ENCODE measurements at regions of chr16 and their contacts with region 1.

Region 1: GRCh38 chr16:84726079-84726668 is 26.4 kb downstream of the USP10 start:
- DNase-seq: peak; percentile 55
- H3K4me3 ChIP-seq: peak overlapping the region in 2 of 4 donors; percentile 10 to 33
- H3K27ac ChIP-seq: peak overlapping the region in 3 of 4 donors; percentile 35 to 65 (median 45)
- H3K4me1 ChIP-seq: peaks cover 21 to 75% (median 26%) of the 10 kb centered on the region in 3 donors
- H3K27me3 ChIP-seq: no peaks in the 10 kb centered on the region
- CTCF ChIP-seq: peak; percentile 93 to 96 (median 95)
- POLR2A ChIP-seq: no peak

Region 2: GRCh38 chr16:84511180-84511824 is 214.9 kb before region 1 on chr16:
- intact Hi-C with region 1: loop called (anchors 10 kb)
- DNase-seq: no peak
- H3K4me3 ChIP-seq: peak overlapping the region in 1 of 4 donors; percentile 26
- H3K27ac ChIP-seq: no peak overlapping the region
- H3K4me1 ChIP-seq: peaks cover 6 to 18% (median 8%) of the 10 kb centered on the region in 3 donors
- H3K27me3 ChIP-seq: no peaks in the 10 kb centered on the region
- CTCF ChIP-seq: peak; percentile 92 to 99 (median 96)
- POLR2A ChIP-seq: no peak

Region 3: GRCh38 chr16:84617791-84618580 is 108.2 kb before region 1 on chr16 and contains the start of gene COTL1:
- intact Hi-C with region 1: loop called (anchors 5 kb)
- DNase-seq: peak; percentile 78
- H3K4me3 ChIP-seq: peak within 1 kb of the TSS; percentile 54 to 87 (median 72)
- H3K27ac ChIP-seq: peak within 1 kb of the TSS; percentile 75 to 90 (median 82)
- H3K4me1 ChIP-seq: peaks cover 24 to 63% (median 29%) of the 10 kb centered on the region in 3 donors
- H3K27me3 ChIP-seq: peaks cover 0 to 11% (median 0%) of the 10 kb centered on the region in 4 donors
- CTCF ChIP-seq: no peak
- POLR2A ChIP-seq: peak in 2 of 4 donors; percentile 75 to 80
- total RNA-seq, gene COTL1: 7.9 to 34.2 (median 23.4) TPM

Region 4: GRCh38 chr16:84672276-84673202 is 53.6 kb before region 1 on chr16:
- intact Hi-C with region 1: loop called (anchors 5 kb)
- DNase-seq: peak; percentile 15
- H3K4me3 ChIP-seq: no peak overlapping the region
- H3K27ac ChIP-seq: no peak overlapping the region
- H3K4me1 ChIP-seq: peaks cover 0 to 7% (median 0%) of the 10 kb centered on the region in 3 donors
- H3K27me3 ChIP-seq: peaks cover 0 to 5% (median 0%) of the 10 kb centered on the region in 4 donors
- CTCF ChIP-seq: peak; percentile 87 to 93 (median 90)
- POLR2A ChIP-seq: no peak